HCT116 (cell line): ENCODE measurements at regions of chr6 and their contacts with region 1.

Region 1: DNA sequence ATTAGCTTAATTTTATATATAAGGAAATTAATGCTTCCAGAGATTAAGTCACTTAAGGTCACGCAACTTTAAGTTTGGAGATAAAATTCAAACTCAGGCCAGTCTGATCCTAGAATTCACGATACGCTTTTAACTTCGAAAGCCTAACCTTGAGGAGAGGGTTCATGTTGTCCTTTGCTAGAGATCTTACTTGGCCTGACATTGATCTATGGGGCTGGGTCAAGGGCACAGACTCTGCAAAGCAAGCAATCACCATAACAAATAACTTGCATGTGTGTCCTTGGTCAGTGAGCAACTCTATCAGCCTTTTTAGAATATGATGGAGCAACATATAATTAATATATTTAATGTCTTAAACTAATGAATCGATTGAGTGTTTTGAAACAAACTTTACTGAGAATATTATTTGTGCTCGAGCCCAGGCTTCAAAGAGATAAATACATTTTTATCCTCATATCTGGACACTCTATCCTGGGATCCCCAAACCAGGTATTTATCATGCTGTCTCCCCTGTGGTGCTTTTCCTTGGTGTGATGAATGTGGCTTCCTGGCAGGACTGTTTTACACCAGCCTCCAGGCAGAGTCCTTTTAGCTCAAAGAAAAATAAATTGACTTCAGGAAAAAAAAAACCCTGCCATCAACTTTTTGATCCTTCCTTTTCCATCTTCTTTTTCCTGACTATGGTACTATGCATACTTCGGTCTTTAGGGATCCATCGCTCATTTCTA is 29.1 kb downstream of the RPS12 start:
- DNase-seq: no peak
- ATAC-seq: no peak
- H3K4me3 ChIP-seq: no peak overlapping the region
- H3K27ac ChIP-seq: no peak overlapping the region
- H3K4me1 ChIP-seq: no peaks in the 10 kb centered on the region
- H3K27me3 ChIP-seq: no peaks in the 10 kb centered on the region
- CTCF ChIP-seq: no peak
- POLR2A ChIP-seq: no peak
- RAD21 ChIP-seq: no peak

Region 2: DNA sequence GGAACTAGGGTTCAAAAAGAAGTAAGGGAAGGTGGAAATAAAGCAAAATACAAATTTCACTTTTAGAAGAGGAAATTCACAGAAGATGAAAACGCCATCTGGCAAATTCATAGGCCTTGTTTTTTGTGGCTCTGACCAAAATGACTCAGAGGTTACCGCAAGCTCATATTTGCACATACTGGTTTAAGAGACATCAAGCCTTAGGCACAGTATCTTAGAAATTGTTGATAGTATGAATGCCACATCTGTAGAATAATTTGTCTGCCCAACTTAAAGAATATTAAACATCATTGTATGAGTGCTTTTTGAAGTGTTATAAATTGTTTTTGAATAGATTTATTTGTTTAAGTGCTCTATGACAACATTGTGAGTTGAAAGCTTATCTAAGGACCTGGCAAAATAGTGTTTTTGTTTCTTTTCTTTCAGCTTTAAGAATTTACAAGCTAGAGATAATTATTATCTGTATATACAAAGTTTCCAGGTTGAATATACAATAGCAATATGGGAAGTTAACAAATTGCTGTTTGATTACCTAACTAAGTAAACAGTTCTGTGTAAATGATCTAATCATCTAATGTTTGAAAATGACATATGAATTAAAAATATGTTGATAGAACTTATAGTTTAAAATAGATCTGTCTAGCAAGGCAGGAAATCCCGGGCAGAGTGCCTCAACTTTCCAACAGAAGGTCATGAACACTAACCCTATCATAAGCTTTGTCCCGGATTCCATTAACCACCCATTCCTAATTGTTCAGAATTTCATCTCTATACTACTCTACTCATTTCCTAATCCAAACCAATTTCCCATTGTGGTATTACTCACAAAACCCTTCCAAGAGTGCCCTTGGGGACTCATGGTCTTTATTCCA is 194.9 kb before region 1 on chr6:
- CTCF ChIA-PET with region 1: no interaction called
- POLR2A ChIA-PET with region 1: no interaction called
- RAD21 ChIA-PET with region 1: no interaction called
- intact Hi-C with region 1: no loop called
- DNase-seq: no peak
- ATAC-seq: no peak
- H3K4me3 ChIP-seq: no peak overlapping the region
- H3K27ac ChIP-seq: no peak overlapping the region
- H3K4me1 ChIP-seq: no peaks in the 10 kb centered on the region
- H3K27me3 ChIP-seq: no peaks in the 10 kb centered on the region
- CTCF ChIP-seq: no peak
- POLR2A ChIP-seq: no peak
- RAD21 ChIP-seq: no peak

Region 3: GRCh38 chr6:132813173-132813856 is 30.2 kb before region 1 on chr6:
- CTCF ChIA-PET with region 1: no interaction called
- POLR2A ChIA-PET with region 1: no interaction called
- RAD21 ChIA-PET with region 1: no interaction called
- intact Hi-C with region 1: no loop called
- DNase-seq: no peak
- ATAC-seq: peak; percentile 33
- H3K4me3 ChIP-seq: peak overlapping the region; percentile 94 to 95
- H3K27ac ChIP-seq: peak overlapping the region; percentile 93
- H3K4me1 ChIP-seq: peaks cover 9 to 51% of the 10 kb centered on the region in 2 experiments
- H3K27me3 ChIP-seq: no peaks in the 10 kb centered on the region
- CTCF ChIP-seq: no peak
- POLR2A ChIP-seq: no peak
- RAD21 ChIP-seq: no peak

Region 4: GRCh38 chr6:132919045-132919860 is 75.8 kb after region 1 on chr6:
- CTCF ChIA-PET with region 1: no interaction called
- POLR2A ChIA-PET with region 1: no interaction called
- RAD21 ChIA-PET with region 1: no interaction called
- intact Hi-C with region 1: loop called (anchors 5 kb)
- DNase-seq: no peak
- ATAC-seq: no peak
- H3K4me3 ChIP-seq: no peak overlapping the region
- H3K27ac ChIP-seq: no peak overlapping the region
- H3K4me1 ChIP-seq: no peaks in the 10 kb centered on the region
- H3K27me3 ChIP-seq: no peaks in the 10 kb centered on the region; the same call in 1 of the 2 replicates
- CTCF ChIP-seq: no peak
- POLR2A ChIP-seq: no peak
- RAD21 ChIP-seq: no peak